Mammary epithelial cell (primary cell): ENCODE measurements at regions of chr22 and their contacts with region 1.

Region 1: GRCh38 chr22:24901462-24901861 is 45.0 kb downstream of the LHFPL7 start:
- DNase-seq: no peak
- H3K4me3 ChIP-seq: no peak overlapping the region
- H3K27ac ChIP-seq: no peak overlapping the region
- H3K4me1 ChIP-seq: no peaks in the 10 kb centered on the region
- H3K27me3 ChIP-seq: no peaks in the 10 kb centered on the region
- CTCF ChIP-seq: no peak

Region 2: DNA sequence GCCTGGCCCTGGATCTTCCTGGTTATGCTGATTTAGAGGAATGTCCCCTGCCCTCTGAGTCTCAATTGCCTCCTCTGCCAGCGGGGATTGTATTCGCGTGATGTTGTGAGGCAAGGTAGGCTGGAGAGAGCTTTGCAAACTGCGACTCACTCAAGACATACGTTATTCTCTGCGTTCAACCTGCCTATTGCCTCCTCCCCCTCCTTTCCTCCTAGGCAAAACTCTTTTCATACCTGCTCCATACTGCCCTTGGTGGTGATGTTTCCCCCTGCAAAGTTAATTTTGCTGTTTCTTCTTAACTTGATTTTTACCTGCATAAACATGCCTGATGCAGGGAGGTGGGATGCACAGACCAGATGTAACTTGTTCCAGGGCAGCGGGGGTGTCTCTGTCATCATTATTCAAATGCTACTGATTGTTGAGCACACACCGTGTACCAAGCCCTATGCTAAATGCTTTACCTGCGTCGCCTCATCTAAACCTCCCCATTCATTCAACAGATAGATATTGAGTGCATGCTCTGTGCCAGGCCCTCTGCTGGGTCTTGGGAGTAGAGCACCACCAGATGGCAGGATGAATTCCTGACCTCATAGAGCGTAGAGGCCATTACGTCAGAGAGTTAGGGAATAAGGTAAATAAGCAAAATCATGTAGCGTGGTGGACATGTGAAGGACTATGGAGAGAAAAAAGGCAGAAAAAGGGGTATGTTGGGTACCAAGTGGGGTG is 66.5 kb before region 1 on chr22:
- CTCF ChIA-PET with region 1: no interaction called
- dilution Hi-C with region 1: loop called (anchors 5 kb)
- in situ Hi-C with region 1: no loop called
- intact Hi-C with region 1: no loop called
- DNase-seq: peak; percentile 48
- H3K4me3 ChIP-seq: no peak overlapping the region
- H3K27ac ChIP-seq: no peak overlapping the region
- H3K4me1 ChIP-seq: no peaks in the 10 kb centered on the region
- H3K27me3 ChIP-seq: no peaks in the 10 kb centered on the region
- CTCF ChIP-seq: peak; percentile 37 to 40

Region 3: DNA sequence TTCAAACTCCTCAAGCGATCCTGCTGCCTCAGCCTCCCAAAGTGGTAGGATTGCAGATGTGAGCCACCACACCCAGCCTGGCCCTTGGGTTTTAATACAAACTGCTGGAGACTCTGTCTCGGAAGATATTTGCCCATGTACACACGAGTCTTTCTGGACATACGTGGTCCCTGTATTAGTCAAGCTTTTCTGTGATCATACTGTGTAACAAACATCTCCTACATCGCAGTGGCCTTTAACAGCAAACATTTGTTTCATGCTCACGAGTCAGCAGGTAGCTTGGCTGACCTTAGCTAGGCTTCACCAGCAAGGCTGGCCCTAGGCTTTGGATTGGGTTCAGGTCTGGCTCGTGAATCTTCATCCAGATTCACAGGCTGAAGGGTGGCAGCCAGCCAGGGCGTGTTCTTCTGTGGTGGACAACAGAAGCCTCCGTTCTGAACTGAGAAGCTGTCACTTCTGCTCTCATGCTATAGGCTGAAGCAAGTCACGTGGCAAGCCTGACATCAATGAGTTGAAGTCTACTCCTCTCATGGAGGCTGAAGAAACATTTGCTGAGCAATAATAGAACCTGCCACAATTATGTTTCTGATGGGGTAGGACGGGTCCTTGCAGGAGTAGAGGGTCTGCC is 59.9 kb after region 1 on chr22:
- CTCF ChIA-PET with region 1: no interaction called
- dilution Hi-C with region 1: no loop called
- in situ Hi-C with region 1: no loop called
- intact Hi-C with region 1: no loop called
- DNase-seq: no peak
- H3K4me3 ChIP-seq: no peak overlapping the region
- H3K27ac ChIP-seq: no peak overlapping the region
- H3K4me1 ChIP-seq: peaks cover 23% of the 10 kb centered on the region
- H3K27me3 ChIP-seq: no peaks in the 10 kb centered on the region
- CTCF ChIP-seq: no peak